Left cardiac atrium (tissue), 4 donors: ENCODE measurements at regions of chr5 and their contacts with region 1.

Region 1: DNA sequence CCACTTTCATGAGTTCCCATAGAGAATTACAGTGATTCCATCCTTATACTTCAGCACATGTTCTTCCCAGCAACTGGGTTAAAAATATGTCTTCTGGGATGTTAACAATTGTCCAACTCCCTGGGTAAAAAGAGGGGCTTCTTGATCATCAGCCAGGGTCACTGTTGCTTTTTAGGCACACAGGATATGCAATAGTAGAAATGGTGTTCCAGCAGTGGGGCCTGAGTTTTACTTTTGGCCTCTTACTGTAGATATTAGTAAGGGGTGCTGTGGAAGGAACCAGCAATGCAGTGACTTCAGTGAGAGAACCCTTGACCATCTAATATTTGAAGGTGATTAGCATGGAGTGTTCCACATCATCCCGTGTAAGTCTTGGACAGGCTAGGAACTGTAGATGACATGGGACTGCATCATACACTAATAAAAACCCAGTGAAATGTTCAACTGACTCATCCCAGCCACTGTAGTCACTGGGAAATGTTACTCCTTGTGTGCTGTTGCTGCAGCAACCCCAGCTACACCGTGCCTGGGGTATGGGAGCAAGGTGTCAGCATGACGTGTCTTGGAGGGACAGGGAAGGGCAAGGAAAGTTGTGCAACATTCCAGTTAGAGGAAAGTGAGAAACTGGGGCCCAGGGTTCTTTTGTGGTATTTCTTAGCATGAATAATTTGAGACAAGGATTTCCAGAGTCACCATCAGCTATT is 610.9 kb downstream of the RAB3C start:
- DNase-seq: peak; percentile 57
- ATAC-seq: peak in 1 of 2 donors; percentile 95

Region 2: GRCh38 chr5:59660737-59661136 is 467.0 kb after region 1 on chr5:
- intact Hi-C with region 1: loop called in 1 of 2 experiments (anchors 10 kb)
- DNase-seq: no peak
- ATAC-seq: peak in 1 of 2 donors; percentile 47